Motor neuron (in vitro differentiated cells): ENCODE measurements at regions of chr10 and their contacts with region 1.

Region 1: DNA sequence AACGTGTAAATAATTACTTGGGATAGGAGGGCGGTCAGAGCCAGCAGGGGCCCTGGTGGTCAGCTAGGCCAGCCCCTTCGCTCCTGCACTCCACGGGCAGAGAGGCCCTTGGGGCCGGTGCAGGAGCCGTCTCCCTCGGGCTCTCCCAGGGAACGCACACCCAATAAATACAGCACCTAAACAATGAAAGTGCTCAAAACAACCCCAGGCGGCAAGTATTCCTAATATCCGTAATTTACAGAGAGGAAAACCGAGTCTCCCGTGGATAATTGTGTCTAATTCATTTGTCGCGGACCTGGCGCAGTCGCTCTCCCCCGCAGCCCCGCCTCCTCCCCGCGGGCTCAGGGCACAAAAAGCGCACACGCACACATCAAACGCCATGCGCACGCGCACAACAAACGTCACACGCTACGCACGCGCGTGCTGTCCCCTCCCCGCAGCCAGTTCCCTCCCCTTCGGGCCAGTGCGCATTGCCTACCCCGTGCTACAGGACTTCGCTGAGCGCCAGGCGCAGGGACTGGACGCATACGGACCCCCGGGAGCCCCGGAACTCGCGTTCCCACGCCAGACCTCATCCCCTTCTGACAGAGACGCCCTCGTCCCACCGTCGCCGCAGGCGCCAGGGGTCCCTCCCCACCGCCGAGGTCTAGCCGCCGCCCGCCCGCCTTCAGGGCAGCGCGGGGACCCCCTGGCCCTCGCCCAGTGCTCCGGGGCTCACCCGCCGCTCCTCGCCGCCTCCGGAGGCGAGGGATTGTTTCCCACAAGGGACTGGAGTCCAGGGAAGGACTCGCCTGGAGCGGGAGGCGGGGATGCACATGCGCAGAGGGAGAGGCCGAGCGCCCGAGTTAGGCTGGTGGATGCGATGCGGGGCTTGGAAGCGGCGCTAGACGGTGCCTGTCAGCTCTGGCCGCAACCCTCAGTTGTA is at the start of gene ZNF248:
- ATAC-seq: peak; percentile 91 to 96 (median 95)
- H3K4me3 ChIP-seq: peak within 1 kb of the TSS; percentile 35 to 95 (median 72)
- H3K27ac ChIP-seq: peak within 1 kb of the TSS; percentile 94 to 97
- H3K4me1 ChIP-seq: peaks cover 0 to 6% of the 10 kb centered on the region in 2 donors
- total RNA-seq, gene ZNF248: 7.4 to 40.1 (median 19.8) TPM

Region 2: DNA sequence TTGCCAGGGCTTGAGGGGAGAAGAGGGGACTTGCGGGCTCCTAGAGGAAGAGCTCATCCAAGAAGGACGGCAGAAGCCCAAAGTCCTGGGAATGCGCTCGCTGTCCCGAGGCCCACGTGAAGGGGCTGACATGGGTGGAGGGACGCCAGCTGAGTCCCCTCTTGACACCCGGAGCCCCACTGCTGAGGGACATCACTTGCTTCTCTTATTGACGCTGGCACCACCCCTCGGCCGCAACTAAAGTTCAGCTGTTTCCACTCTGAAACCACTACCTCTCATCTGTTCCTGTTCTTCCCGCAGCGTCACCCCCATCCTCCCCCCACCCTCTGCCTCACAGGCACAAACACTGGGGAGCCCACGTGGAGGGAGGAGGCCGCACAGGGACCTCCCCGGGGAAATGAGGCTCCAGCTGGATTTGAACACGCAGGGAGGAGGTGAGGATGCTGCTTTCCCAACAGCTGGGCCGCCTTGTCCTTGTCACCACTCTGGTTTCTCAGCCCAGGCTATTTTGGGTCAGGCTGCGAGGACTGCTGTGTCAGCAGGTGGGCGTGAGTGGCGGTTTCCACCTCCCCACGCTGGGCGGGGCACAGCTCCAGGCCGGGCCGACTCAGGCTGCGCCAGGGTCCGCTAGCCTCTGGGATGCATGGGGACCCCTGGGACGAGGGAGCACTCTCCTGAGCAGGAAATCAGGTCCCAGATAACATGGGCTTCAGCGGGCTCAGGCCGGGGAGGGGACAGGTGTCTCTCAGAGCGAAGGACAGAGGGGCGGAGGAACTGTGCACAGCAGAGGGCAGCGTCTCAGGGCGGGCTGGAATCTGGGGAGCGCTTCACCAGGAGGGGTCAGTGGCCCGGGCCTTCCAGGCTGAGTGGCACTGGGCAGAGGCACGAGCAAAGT is 156.4 kb before region 1 on chr10:
- in situ Hi-C with region 1: no loop called
- ATAC-seq: no peak
- H3K4me3 ChIP-seq: no peak overlapping the region
- H3K27ac ChIP-seq: no peak overlapping the region
- H3K4me1 ChIP-seq: no peaks in the 10 kb centered on the region

Region 3: DNA sequence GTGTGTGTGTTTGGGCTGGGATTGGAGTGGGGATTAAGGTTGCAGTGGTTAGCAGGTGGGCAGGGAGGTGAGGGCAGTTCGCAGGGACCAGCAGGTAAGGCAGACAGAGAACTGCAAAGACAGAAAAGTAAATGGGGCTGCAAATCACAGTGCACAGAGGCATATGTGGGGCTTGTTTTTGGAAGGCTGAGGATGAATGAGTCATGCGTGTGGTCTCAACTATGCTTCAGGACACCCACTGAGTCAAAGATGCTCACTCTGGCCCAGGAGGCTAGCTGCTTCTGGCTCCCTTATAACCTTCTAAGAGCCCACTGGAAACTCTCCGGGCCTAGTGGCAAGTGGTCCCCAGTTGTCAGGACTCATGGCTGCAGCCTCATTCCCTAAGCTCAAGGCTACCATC is 118.4 kb before region 1 on chr10:
- in situ Hi-C with region 1: no loop called
- ATAC-seq: no peak
- H3K4me3 ChIP-seq: no peak overlapping the region
- H3K27ac ChIP-seq: no peak overlapping the region
- H3K4me1 ChIP-seq: no peaks in the 10 kb centered on the region

Region 4: DNA sequence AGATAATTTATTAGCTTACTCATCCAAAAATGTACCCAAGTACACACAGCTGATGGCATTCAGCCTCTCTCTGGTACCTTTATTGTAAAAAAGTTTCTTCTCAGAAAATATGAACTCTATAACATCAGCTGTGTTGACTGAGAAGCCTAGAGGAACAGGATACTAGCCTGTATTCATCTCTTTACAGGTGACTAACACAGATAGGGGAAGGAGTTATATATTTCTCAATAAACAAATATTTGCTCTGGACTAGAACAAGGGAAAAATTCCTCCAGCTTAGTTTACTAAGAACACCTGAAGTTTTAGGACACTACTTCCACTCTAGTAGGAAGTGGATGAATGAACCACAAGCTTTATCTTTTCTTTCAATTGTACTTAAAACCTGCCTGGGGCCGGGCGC is 68.0 kb before region 1 on chr10:
- in situ Hi-C with region 1: no loop called
- ATAC-seq: no peak
- H3K4me3 ChIP-seq: no peak overlapping the region
- H3K27ac ChIP-seq: no peak overlapping the region
- H3K4me1 ChIP-seq: no peaks in the 10 kb centered on the region

Region 5: GRCh38 chr10:37952056-37952755 is 94.7 kb after region 1 on chr10:
- in situ Hi-C with region 1: loop called in 1 of 9 experiments (anchors 25 kb)
- ATAC-seq: peak in 2 of 8 experiments; percentile 50 to 52
- H3K4me3 ChIP-seq: no peak overlapping the region
- H3K27ac ChIP-seq: no peak overlapping the region
- H3K4me1 ChIP-seq: no peaks in the 10 kb centered on the region

Region 6: GRCh38 chr10:37992083-37992482 is 134.5 kb after region 1 on chr10:
- in situ Hi-C with region 1: no loop called
- ATAC-seq: no peak
- H3K4me3 ChIP-seq: no peak overlapping the region
- H3K27ac ChIP-seq: no peak overlapping the region
- H3K4me1 ChIP-seq: no peaks in the 10 kb centered on the region